ENCODE measurements at regions of chr11 and their contacts with region 1.

Region 1: DNA sequence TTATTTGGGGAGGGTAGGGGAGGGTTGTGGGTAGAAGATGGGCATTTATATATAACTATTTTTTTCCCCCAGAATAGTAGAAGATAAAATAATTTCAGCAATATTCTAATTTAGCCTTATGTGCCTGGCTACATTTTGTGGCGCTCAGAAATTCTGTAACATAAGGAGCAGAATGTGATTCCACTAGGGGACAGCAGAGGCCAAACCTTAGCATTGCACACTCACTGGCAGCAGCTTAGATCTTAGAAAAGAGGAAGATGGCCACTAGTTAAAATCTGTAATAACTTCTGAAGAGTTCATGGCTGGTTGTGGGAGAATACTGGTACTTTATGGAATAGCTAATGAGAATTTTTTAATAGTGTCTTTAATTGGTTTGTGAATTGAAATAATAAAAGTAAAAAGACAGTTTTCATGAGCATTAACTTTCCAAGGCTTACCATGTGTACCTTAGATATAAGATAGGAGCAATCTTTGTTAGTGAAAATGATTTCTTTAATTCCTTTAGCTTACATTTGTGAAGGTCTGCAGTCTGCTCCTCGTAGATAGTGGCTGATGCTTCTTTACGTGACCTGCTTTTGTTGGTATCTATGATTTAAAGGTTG is 33.1 kb downstream of the DDX10 start:
- DNase-seq: peak in 1 of 2 donors; percentile 65
- ATAC-seq: peak in 7 of 8 donors; percentile 79 to 86 (median 83)
- H3K4me3 ChIP-seq: no peak overlapping the region
- H3K27ac ChIP-seq: no peak overlapping the region
- H3K4me1 ChIP-seq: no peaks in the 10 kb centered on the region
- H3K27me3 ChIP-seq: no peaks in the 10 kb centered on the region
- CTCF ChIP-seq: peak; percentile 56 to 91 (median 86)

Region 2: DNA sequence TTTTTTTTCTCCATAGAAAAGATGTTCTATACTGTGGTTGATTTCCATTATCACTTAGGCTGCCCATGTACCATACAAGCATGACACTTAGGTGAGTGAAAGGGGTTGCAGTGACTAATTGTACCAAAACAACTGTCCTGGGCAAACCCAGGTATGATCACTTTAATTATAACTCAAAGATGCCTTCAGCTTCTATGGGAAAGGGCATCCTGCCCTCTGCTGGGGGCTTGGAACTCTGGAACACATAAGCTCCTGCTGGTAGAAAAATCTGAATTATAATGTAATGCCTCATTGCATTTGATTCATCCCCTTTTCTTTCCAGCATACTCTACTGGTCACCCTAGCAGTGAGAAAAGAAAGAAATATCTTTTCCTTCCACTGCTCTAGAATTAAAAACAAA is 173.2 kb after region 1 on chr11:
- intact Hi-C with region 1: loop called in 6 of 10 experiments (anchors 5 to 10 kb)
- DNase-seq: peak in 1 of 2 donors; percentile 11
- ATAC-seq: peak in 4 of 8 donors; percentile 51 to 79 (median 64)
- H3K4me3 ChIP-seq: no peak overlapping the region
- H3K27ac ChIP-seq: peak overlapping the region in 1 of 10 donors; percentile 53
- H3K4me1 ChIP-seq: peaks cover 0 to 23% (median 3%) of the 10 kb centered on the region in 9 donors
- H3K27me3 ChIP-seq: no peaks in the 10 kb centered on the region
- CTCF ChIP-seq: peak in 8 of 9 donors; percentile 36 to 78 (median 62)

Region 3: DNA sequence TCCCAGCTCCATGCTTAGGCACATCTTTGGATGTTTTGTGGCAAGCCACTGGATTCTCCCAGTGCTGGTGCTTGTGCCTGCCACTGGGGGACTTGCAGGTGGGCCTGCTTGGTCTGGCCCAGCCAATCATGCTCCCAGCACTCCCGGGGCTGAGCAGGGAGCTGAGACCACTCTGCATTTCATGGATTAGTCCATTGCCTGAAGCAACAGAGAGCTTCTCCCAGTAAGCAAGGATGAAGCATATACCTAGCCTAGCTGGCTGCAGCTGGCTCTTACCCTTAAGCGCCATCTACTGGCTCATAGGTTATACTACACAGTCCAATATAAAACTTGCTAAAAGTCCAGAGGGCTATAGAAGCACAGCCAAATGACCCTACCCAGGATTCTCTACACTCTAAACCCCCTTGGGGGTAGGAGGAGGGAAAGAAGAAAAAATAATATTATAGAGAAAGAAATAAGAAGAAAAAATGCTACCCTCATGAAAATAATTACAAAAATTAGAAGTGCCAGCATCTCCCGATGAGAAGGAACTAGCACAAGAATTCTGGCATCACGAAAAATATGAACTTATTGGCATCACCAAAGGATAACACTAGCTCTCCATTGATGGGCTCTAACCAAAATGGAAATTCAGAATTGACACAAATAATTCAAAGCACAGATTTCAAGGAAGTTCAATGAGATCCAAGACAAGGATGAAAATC is 999.3 kb after region 1 on chr11:
- intact Hi-C with region 1: loop called in 7 of 10 experiments (anchors 2 to 10 kb)
- DNase-seq: no peak
- ATAC-seq: peak in 5 of 8 donors; percentile 47 to 69 (median 59)
- H3K4me3 ChIP-seq: no peak overlapping the region
- H3K27ac ChIP-seq: no peak overlapping the region
- H3K4me1 ChIP-seq: no peaks in the 10 kb centered on the region
- H3K27me3 ChIP-seq: no peaks in the 10 kb centered on the region
- CTCF ChIP-seq: peak; percentile 28 to 69 (median 52)

Region 4: GRCh38 chr11:109864834-109865547 is 1167.0 kb after region 1 on chr11:
- intact Hi-C with region 1: loop called in 7 of 10 experiments (anchors 5 to 10 kb)
- DNase-seq: no peak
- ATAC-seq: no peak
- H3K4me3 ChIP-seq: no peak overlapping the region
- H3K27ac ChIP-seq: no peak overlapping the region
- H3K4me1 ChIP-seq: peaks cover 0 to 15% (median 0%) of the 10 kb centered on the region in 9 donors
- H3K27me3 ChIP-seq: no peaks in the 10 kb centered on the region
- CTCF ChIP-seq: no peak

Region 5: GRCh38 chr11:109939166-109939810 is 1241.3 kb after region 1 on chr11:
- intact Hi-C with region 1: loop called in 8 of 10 experiments (anchors 2 to 10 kb)
- DNase-seq: peak in 1 of 2 donors; percentile 40
- ATAC-seq: peak; percentile 59 to 85 (median 72)
- H3K4me3 ChIP-seq: no peak overlapping the region
- H3K27ac ChIP-seq: no peak overlapping the region
- H3K4me1 ChIP-seq: peaks cover 0 to 4% (median 0%) of the 10 kb centered on the region in 9 donors
- H3K27me3 ChIP-seq: no peaks in the 10 kb centered on the region
- CTCF ChIP-seq: peak in 7 of 9 donors; percentile 43 to 67 (median 55)